ENCODE measurements at regions of chr16 and their contacts with region 1.

Region 1: DNA sequence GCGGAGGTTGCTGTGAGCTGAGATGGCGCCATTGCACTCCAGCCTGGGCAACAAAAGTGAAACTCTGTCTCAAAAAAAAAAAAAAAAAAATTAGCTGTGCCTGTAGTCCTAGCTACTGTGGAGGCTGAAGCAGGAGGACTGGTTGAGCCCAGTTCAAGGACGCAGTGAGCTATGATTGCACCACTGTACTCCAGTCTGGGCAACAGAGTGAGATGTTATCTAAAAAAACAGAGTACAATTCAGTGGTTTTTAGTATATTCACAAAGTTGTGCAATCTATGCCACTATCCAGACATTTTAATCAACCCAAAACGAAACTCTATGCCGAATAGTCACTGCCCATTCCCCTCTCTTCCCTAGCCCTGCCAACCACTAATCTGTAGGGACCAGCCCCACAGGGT is 25.1 kb downstream of the C16orf54 start:
- DNase-seq: no peak
- ATAC-seq: no peak
- H3K4me3 ChIP-seq: no peak overlapping the region
- H3K27ac ChIP-seq: no peak overlapping the region
- H3K4me1 ChIP-seq: no peaks in the 10 kb centered on the region
- H3K27me3 ChIP-seq: no peaks in the 10 kb centered on the region
- CTCF ChIP-seq: no peak

Region 2: GRCh38 chr16:29805378-29806098 is 84.8 kb after region 1 on chr16:
- CTCF ChIA-PET with region 1: no interaction called
- POLR2A ChIA-PET with region 1: interaction called, 12 read pairs
- intact Hi-C with region 1: no loop called
- DNase-seq: peak; percentile 93
- ATAC-seq: peak; percentile 45
- H3K4me3 ChIP-seq: peak overlapping the region; percentile 68
- H3K27ac ChIP-seq: peak overlapping the region; percentile 75
- H3K4me1 ChIP-seq: peaks cover 30% of the 10 kb centered on the region
- H3K27me3 ChIP-seq: no peaks in the 10 kb centered on the region
- CTCF ChIP-seq: no peak

Measured in PC-3 (cell line).